Activated T-helper 2 cell treated with anti-CD3 and anti-CD28 coated beads, Interferon-gamma antibody, Interleukin-2, Interleukin-4, amounts not matched to agents 10 μg/mL and 5 μg/mL and 100 μg/mL, durations not matched to agents 14 hours and 24 hours and 36 hours (primary cell): ENCODE measurements at regions of chr1 and their contacts with region 1.

Region 1: DNA sequence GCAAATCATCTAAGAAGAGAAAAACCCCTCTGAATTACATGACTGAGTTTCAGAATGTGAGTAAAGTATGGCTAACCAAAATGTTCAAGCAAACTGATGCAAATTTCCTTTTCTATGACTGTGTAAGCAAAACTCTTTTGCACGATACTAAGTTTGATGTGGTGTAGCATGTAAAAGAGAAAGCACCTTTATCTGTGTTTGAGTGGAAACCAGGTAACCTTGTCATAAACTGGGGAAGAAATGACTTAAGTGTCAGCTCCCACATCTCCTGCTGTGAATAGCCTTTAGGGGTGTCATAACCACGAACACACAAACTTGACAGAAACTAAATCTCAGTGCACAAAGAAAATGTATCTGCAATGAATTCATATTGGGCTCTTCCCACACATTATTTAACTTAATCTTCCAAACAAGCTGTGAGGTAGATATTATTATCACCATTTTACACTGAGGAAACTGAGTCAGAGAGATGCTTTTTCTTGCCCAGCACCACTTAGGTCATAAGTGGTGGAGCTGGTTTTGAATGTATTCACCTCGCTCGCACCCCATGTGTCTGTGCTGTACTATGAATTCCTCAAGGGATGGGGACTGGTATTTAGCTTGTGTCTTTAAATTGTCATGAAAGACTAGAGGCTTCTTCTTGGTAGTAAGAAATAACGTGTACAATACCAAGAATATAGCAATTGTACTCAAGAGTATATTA is 32.9 kb upstream of the IL12RB2 start:
- DNase-seq: no peak
- H3K4me3 Mint-ChIP-seq: no peak overlapping the region
- H3K27ac Mint-ChIP-seq: peak overlapping the region; percentile 59
- H3K4me1 Mint-ChIP-seq: peaks cover 37% of the 10 kb centered on the region
- H3K27me3 Mint-ChIP-seq: no peaks in the 10 kb centered on the region

Region 2: GRCh38 chr1:67162957-67163356 is 111.8 kb before region 1 on chr1:
- intact Hi-C with region 1: loop called (anchors 1 kb)
- DNase-seq: peak; percentile 40
- H3K4me3 Mint-ChIP-seq: no peak overlapping the region
- H3K27ac Mint-ChIP-seq: peak overlapping the region; percentile 58
- H3K4me1 Mint-ChIP-seq: peaks cover 41% of the 10 kb centered on the region
- H3K27me3 Mint-ChIP-seq: no peaks in the 10 kb centered on the region

Region 3: DNA sequence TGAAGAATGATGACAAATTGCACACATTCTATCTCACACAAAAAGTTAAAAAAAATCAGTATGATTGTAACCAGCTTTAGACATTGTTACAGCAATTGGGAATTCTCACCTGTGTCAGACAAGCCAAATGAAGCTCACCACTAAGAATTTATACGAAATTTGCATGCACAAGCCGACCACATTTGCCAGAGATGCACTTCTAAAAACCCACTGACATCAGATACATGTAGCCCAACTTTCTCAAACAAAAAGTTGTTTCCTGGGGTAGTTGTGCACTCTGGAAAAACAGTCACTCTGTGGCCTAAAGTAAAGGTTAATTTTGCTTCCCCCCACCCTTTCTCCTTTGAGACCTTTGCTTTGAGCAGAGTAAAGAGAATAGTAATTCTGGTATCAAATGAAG is 35.0 kb before region 1 on chr1:
- intact Hi-C with region 1: loop called (anchors 5 kb)
- DNase-seq: no peak
- H3K4me3 Mint-ChIP-seq: no peak overlapping the region
- H3K27ac Mint-ChIP-seq: peak overlapping the region; percentile 14
- H3K4me1 Mint-ChIP-seq: peaks cover 7% of the 10 kb centered on the region
- H3K27me3 Mint-ChIP-seq: no peaks in the 10 kb centered on the region

Region 4: DNA sequence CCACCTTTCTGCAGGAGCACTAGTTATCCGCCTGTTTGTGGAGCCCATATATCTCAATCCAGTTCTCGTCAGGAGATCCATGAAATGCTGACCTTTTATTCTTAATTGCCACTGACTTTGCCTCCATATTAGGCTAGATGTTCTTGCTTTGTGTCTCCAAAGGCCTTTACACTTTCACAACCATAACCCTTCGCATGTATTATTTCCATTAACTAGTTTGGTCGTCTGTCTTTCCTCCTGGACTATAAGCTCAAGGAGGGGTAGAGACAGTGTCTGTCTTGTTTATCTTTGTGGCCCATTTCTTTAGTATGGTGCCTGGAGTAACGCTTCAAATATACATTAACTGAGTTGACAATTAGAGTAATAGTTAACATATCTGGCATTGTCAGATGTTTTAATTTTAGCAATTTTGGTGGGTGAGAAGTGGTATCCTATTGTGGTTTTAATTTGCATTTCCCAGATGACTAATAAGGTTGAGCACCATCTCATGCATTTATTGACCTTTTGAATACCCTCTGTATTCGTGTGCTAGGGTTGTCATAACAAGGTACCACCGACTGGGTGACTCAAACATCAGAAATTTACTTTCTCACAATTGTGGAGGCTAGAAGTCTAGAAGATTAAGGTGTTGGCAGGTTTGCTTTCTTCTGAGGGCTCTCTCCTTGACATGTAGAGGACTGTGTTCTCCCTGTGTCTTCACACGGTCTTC is 11.2 kb after region 1 on chr1:
- intact Hi-C with region 1: loop called (anchors 1 kb)
- DNase-seq: no peak
- H3K4me3 Mint-ChIP-seq: no peak overlapping the region
- H3K27ac Mint-ChIP-seq: peak overlapping the region; percentile 78
- H3K4me1 Mint-ChIP-seq: peaks cover 27% of the 10 kb centered on the region
- H3K27me3 Mint-ChIP-seq: no peaks in the 10 kb centered on the region

Region 5: DNA sequence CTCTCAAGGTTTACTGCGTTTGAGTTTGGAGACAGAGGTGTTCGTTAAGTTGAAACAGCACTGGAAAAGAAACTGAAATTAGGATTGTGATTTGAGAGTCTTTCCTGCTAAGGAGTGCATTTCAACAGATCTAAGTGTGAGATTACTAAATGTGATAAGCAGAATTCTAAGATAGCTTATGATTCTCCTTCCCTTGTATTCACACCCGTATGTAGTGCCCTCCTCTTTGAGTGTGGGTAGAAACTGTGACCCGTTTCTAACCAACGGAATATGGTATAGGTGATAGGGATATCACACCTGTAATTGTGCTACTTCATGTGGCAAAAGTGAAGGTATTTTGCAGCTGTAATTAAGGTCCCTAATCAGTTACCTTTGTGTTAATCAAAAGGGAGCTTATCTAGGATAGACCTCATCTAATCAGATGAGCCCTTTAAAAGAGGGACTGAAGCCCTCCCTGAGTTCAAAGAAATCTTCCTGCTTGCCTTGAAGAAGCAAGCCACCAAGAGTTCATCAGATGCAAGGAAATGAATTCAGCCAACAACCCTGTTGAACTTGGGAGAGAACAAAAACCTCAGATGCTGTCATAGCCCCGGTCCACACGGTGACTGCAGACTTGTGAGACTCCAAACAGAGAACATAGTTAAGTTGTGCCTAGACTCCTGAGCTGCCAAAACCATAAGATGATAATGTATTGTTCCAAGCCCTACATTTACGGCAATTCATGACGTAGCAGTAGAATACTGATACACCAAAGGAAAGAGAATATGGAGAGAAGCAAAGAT is 20.3 kb after region 1 on chr1:
- intact Hi-C with region 1: loop called (anchors 2 kb)
- DNase-seq: peak; percentile 34
- H3K4me3 Mint-ChIP-seq: peak overlapping the region; percentile 68
- H3K27ac Mint-ChIP-seq: peak overlapping the region; percentile 92
- H3K4me1 Mint-ChIP-seq: peaks cover 46% of the 10 kb centered on the region
- H3K27me3 Mint-ChIP-seq: no peaks in the 10 kb centered on the region